H1 (cell line): ENCODE measurements at regions of chr17 and their contacts with region 1.

Region 1: DNA sequence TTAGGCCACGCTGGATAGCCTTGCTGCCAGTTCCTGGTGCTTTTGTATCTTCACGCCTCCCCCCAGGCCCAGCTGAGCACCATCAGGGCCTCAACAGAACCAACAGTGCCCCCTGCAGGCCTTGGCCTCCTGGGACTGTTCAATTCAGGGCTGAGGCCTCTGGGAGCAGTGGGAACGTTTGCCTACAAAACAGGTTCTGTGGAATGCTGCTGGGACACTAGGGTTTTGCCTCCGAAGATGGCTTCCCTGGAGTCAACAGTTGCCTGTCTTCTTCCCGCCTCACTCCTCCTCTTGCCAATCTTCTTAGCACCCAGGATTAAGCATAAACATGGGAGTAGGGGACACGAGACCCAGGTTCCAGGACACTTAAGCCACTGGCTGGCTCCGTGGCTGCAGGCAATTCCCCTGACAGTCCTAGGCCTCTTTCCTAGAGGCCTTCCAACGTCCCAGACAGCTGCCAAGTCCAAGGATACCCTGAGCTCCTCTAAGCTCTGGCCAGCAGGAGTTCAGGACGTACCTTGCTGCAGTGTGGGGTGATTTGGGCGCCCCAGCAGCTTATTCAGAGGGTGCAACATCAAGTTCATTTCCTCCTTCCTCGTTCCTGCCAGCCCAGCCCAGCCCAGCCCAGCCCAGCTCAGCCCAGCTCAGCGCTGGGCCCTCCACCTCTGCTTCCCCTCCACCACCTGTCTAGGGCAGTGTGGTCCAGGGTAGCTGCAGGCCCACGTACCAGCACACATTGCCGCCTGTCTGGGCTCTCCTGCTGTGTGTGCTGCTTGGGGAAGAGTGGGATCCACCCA is 246.6 kb upstream of the RPL38 start:
- DNase-seq: peak; percentile 59 to 94
- H3K4me3 ChIP-seq: no peak overlapping the region
- H3K27ac ChIP-seq: no peak overlapping the region; the same call in 1 of the 2 replicates
- H3K4me1 ChIP-seq: peaks cover 0 to 7% (median 6%) of the 10 kb centered on the region in 4 experiments; a peak in 5 of 7 replicates
- H3K27me3 ChIP-seq: peaks cover 0 to 16% (median 12%) of the 10 kb centered on the region in 4 experiments; a peak in 6 of 7 replicates
- CTCF ChIP-seq: peak; percentile 82 to 94 (median 93)
- EP300 ChIP-seq: peak in 1 of 2 experiments; percentile 32; a peak in 1 of 3 replicates
- POLR2A ChIP-seq: no peak
- RAD21 ChIP-seq: peak; percentile 86 to 93

Region 2: DNA sequence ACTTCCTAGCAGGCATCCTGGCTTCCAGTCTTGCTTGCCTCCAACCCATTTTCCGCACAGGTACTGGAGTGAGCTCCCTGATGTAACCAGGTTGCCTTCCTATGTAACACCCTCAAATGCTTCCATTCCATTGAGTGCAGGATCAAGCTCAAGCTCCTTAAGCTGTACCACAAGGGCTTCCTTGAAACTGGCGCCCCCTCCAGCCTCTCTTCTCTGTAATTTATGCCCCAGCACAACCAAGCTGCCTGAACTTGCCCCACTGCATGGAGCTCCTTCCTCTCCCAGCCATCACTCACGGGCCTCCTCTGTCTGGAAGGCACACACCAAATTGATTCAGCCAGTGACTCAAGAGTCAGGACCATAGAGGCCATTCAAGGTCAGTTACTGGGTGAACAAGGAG is 11.8 kb after region 1 on chr17:
- CTCF ChIA-PET with region 1: interaction called, 13 read pairs
- POLR2A ChIA-PET with region 1: interaction called, 3 read pairs
- DNase-seq: no peak
- H3K4me3 ChIP-seq: no peak overlapping the region
- H3K27ac ChIP-seq: no peak overlapping the region
- H3K4me1 ChIP-seq: peaks cover 0 to 3% (median 0%) of the 10 kb centered on the region in 4 experiments; a peak in 2 of 7 replicates
- H3K27me3 ChIP-seq: no peaks in the 10 kb centered on the region
- CTCF ChIP-seq: peak in 2 of 3 experiments; percentile 12 to 33; a peak in 2 of 4 replicates
- EP300 ChIP-seq: no peak
- POLR2A ChIP-seq: no peak
- RAD21 ChIP-seq: peak; percentile 28 to 36